Activated CD4-positive, alpha-beta T cell treated with anti-CD3 and anti-CD28 coated beads, Interleukin-2, amount 10 ng/mL, durations not matched to agents 24 days and 14 days (primary cell): ENCODE measurements at regions of chr4 and their contacts with region 1.

Region 1: DNA sequence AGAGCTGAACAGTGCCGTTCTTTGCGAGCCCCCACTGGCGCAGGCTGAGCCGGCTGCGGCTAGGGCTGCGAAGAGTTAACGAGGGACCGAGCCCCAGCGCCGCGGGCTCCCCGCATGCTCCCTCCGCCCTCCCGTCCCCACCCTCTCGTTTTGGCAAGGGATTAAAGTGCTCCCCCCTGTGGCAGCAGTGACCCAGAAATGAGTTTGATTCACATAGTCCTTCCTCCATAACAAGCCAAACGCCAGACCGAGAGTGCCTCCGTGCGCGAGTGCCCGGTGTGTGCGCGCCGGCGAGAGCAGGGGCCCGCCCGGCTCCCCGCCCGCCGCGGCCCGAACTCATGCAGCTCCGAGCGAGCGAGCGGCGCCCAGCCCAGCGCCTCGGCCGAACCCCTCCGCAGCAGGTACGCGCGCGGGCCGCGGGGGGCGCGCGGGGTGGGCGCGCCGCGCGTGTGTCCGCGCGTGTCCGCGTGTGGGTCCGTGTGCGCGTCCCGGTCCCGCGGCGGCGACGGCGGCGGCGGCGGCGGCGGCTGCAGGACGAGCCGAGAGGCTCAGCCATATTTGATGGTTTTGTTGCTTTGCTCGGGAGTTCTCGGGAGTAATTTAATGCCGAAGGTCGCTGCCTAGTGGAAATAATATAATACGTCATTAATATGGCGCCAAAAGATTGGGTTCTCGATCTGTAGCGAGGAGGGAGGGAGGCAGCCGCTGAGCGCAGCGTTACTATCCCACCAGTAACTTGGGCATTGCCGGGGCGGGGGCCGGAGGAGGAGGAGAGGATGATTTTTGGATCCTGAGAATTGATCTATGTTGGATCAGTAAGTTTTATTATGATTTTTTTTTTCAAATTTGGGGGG is at the start of gene JADE1:
- DNase-seq: peak; percentile 96
- H3K4me3 Mint-ChIP-seq: peak within 1 kb of the TSS; percentile 94
- H3K27ac Mint-ChIP-seq: peak within 1 kb of the TSS; percentile 99
- H3K4me1 Mint-ChIP-seq: peaks cover 10% of the 10 kb centered on the region
- H3K27me3 Mint-ChIP-seq: peaks cover 1% of the 10 kb centered on the region
- total RNA-seq, gene JADE1: 42.6 and 47.0 TPM in 2 replicates

Region 2: DNA sequence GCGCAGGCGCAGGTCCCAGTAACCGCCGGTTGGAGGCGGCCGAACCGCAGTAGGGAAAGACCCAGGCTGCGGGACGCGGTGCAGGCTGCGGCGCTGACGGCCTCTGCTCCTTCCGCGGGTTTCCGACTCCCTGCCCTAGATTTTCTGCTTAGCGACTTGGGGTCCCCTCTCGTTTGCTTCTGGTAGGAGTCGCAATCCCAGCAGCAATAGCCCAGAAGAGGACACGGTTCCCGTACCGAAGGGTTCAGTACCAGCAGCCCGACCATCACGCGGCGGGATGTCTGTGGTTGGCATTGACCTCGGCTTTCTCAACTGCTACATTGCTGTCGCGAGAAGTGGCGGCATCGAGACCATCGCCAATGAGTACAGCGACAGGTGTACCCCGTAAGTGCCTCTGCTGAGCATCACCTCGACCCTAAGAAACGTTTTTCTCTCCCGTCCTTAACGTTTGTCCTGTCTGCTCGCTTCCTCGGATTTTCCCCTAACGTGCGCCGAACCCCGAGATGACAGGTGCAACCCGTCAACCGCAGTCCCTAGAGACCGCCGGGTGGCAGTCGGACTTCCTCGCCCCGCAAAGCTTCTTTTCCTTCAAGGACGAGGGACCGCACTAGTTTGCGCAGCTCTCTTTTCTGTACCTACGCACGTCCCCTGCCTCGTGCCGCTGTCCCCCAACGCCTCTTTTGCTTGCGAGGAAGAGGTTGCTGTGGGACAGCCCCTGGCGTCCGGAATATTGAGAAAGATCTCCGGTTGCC is 1027.3 kb before region 1 on chr4 and contains the start of gene HSPA4L:
- intact Hi-C with region 1: loop called (anchors 5 kb)
- DNase-seq: peak; percentile 89
- H3K4me3 Mint-ChIP-seq: peak within 1 kb of the TSS; percentile 94
- H3K27ac Mint-ChIP-seq: peak within 1 kb of the TSS; percentile 91
- H3K4me1 Mint-ChIP-seq: peaks cover 18% of the 10 kb centered on the region
- H3K27me3 Mint-ChIP-seq: peaks cover 72% of the 10 kb centered on the region
- total RNA-seq, gene HSPA4L: 1.3 and 1.7 TPM in 2 replicates

Region 3: GRCh38 chr4:127965062-127965802 is 844.5 kb before region 1 on chr4 and contains the starts of genes ABHD18 and MFSD8:
- intact Hi-C with region 1: loop called (anchors 1 kb)
- DNase-seq: peak; percentile 100
- H3K4me3 Mint-ChIP-seq: peak within 1 kb of the TSS; percentile 97
- H3K27ac Mint-ChIP-seq: peak within 1 kb of the TSS; percentile 97
- H3K4me1 Mint-ChIP-seq: peaks cover 31% of the 10 kb centered on the region
- H3K27me3 Mint-ChIP-seq: peaks cover 2% of the 10 kb centered on the region
- total RNA-seq, gene ABHD18: 17.3 and 18.5 TPM in 2 replicates
- total RNA-seq, gene MFSD8: 21.5 and 21.8 TPM in 2 replicates

Region 4: GRCh38 chr4:128191115-128191781 is 618.5 kb before region 1 on chr4:
- intact Hi-C with region 1: loop called (anchors 1 kb)
- DNase-seq: peak; percentile 89
- H3K4me3 Mint-ChIP-seq: no peak overlapping the region
- H3K27ac Mint-ChIP-seq: no peak overlapping the region
- H3K4me1 Mint-ChIP-seq: peaks cover 11% of the 10 kb centered on the region
- H3K27me3 Mint-ChIP-seq: no peaks in the 10 kb centered on the region

Region 5: DNA sequence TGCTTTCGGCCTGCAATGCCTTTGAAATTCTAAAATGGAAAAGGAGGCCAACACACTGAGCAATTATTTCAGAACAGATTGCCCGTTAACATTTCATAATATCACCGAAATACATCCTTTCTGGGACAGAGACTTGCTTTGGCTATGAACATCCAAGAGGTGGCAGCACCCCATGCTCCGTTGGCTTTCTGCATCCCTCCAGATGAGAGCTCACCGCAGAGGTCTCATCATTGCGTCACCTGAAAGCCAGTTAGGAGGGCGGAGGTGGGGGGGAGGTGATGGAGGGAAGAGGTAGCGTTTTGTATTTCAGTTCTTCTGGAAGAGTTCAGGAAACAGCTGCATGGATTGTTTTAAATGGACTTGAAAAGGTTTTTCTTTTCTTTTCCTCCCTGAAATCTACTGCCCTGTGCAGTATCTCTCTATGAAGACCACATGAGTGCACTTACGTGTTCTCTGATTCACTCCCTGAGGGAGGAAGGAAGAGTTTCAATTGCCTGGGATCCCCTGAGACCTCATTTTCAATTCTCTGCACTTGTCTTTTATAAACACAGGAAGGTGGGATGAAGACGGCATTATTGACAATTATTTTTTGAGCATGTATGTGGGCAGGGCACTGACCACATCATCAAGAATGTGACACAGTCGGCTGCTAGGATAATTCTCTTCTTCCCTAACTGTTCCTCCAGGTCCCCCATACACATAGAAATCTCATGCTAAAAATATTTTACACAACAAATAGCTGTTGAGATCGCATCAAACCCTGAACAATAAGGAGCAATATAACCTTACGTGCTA is 355.2 kb before region 1 on chr4:
- intact Hi-C with region 1: loop called (anchors 1 kb)
- DNase-seq: peak; percentile 84
- H3K4me3 Mint-ChIP-seq: no peak overlapping the region
- H3K27ac Mint-ChIP-seq: no peak overlapping the region
- H3K4me1 Mint-ChIP-seq: peaks cover 7% of the 10 kb centered on the region
- H3K27me3 Mint-ChIP-seq: no peaks in the 10 kb centered on the region

Region 6: DNA sequence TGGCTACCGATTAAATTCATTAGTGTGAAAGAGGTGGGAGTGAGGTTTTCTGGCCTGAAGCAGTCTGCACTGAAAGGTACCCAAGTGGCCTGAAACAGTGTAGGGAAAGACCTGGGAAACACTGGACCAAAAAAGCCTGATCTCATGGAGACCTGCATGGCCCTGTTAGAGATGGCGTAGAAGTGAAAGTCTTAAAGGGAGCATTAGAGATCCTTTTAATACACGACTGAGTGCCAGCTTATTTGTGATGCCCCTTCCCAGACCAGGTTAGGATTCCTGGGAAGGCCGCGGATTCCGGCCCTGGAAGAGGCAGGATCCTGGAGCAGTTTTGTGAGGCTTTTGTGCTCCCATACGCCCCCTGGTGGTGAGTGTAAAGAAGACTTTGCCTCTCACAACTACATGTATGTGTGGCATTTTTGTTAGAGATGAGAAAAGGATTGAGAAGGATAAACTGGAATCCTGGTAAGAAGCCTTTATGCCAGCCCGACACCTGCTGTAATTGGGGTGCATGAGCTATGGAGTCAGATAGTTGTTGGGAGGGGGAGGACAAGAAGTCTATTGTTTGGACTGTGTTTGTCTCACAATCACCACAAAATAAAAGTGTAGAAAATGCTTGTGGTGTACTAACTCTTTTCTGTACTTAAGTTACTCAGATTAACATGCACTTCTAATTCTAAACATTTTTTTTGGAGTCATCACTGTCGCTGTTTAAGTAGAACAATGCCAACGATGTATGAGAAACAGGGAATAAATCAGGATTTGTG is 53.8 kb after region 1 on chr4:
- intact Hi-C with region 1: loop called (anchors 1 kb)
- DNase-seq: peak; percentile 88
- H3K4me3 Mint-ChIP-seq: peak overlapping the region; percentile 42
- H3K27ac Mint-ChIP-seq: peak overlapping the region; percentile 86
- H3K4me1 Mint-ChIP-seq: peaks cover 44% of the 10 kb centered on the region
- H3K27me3 Mint-ChIP-seq: no peaks in the 10 kb centered on the region